ENCODE measurements at regions of chr11 and their contacts with region 1.

Region 1: DNA sequence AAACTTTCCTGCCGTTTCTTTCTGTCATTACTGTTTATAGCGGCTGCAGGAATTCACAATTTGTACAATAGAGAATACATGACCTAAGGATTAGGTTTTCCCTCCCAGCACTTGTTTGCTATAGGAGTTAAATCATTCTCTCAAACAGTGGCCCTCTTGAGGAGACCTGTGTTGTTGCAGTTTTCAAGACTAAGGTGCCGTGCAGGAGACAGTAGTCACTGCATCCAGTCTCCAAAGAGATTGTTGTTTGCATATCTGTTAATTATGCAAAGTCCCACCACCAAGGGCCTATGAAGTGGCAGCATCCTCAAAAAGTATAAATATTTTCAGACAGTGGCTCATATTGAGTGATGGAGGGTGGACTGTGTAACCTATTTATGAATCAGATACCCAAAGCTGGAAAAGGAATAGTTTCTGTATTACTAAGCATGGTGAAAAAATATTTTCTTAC is 2.3 kb downstream of the PRSS23 start:
- DNase-seq: no peak
- H3K4me3 ChIP-seq: peak overlapping the region; percentile 77 to 85 (median 81)
- H3K27ac ChIP-seq: peak overlapping the region; percentile 8 to 88 (median 82)
- H3K4me1 ChIP-seq: peaks cover 20 to 66% (median 54%) of the 10 kb centered on the region in 4 donors
- H3K27me3 ChIP-seq: no peaks in the 10 kb centered on the region
- CTCF ChIP-seq: peak; percentile 52 to 71 (median 66)
- EP300 ChIP-seq: no peak
- POLR2A ChIP-seq: no peak

Region 2: GRCh38 chr11:86456052-86456939 is 346.3 kb before region 1 on chr11:
- intact Hi-C with region 1: loop called (anchors 5 kb)
- DNase-seq: peak; percentile 96
- H3K4me3 ChIP-seq: no peak overlapping the region
- H3K27ac ChIP-seq: peak overlapping the region in 1 of 4 donors; percentile 4
- H3K4me1 ChIP-seq: peaks cover 23 to 53% (median 42%) of the 10 kb centered on the region in 4 donors
- H3K27me3 ChIP-seq: peaks cover 0 to 4% (median 0%) of the 10 kb centered on the region in 4 donors
- CTCF ChIP-seq: peak; percentile 91
- EP300 ChIP-seq: no peak
- POLR2A ChIP-seq: no peak

Region 3: DNA sequence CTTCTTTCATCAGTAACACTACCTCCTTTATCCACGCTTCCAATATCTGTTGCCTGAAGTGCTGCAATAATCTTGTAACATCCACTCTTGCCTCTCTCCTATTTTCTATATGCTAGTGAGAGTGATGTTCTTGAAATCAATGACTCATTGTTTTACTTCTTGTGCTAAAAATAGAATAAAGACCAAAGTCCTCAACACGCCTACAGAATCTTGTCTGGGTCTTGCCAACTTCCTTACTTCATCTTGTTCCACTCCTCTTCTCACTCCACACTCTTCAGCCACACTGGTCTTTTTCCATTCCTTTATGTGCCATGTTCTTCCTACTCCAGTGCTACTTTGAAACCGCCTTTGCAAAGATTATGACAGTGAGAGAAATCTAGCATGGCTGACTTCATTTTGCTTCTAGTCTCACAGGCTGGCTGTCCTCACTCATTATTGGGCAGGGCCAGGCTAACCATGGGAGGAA is 291.5 kb before region 1 on chr11:
- intact Hi-C with region 1: no loop called
- DNase-seq: no peak
- H3K4me3 ChIP-seq: no peak overlapping the region
- H3K27ac ChIP-seq: no peak overlapping the region
- H3K4me1 ChIP-seq: peaks cover 7 to 20% (median 20%) of the 10 kb centered on the region in 4 donors
- H3K27me3 ChIP-seq: no peaks in the 10 kb centered on the region
- CTCF ChIP-seq: no peak
- EP300 ChIP-seq: no peak
- POLR2A ChIP-seq: no peak

Region 4: DNA sequence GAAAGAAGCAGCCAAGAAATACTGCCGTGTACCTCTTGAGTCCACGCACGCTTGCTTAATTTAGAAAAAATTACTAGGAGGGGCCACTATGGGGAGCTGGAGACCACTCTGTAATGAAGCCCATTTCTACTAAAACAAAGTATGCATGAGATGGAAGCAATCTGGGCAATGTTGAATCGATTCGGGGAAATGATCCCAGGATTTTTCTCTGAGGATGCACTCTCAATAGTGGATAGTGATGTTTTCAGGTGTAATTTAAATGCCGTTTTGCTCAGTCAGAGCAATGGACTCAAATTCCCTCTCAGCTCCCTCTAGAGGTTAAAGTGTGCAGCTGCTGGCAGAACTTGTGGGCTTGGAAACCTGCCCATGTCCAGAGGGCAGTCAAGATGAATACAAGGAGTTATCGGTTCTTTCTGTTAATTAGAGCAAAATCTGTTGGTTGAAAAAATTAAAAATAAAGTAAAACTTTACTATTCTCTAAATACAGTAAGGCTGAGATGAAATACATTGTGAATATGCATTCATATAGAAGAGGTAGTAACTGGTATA is 194.3 kb before region 1 on chr11:
- intact Hi-C with region 1: loop called (anchors 5 kb)
- DNase-seq: peak; percentile 92
- H3K4me3 ChIP-seq: peak overlapping the region in 3 of 4 donors; percentile 21 to 33 (median 25)
- H3K27ac ChIP-seq: peak overlapping the region; percentile 1 to 69 (median 30)
- H3K4me1 ChIP-seq: peaks cover 25 to 48% (median 40%) of the 10 kb centered on the region in 4 donors
- H3K27me3 ChIP-seq: no peaks in the 10 kb centered on the region
- CTCF ChIP-seq: peak; percentile 87 to 92 (median 91)
- EP300 ChIP-seq: no peak
- POLR2A ChIP-seq: no peak

Region 5: GRCh38 chr11:86620891-86621521 is 181.6 kb before region 1 on chr11:
- intact Hi-C with region 1: loop called (anchors 5 kb)
- DNase-seq: no peak
- H3K4me3 ChIP-seq: no peak overlapping the region
- H3K27ac ChIP-seq: peak overlapping the region; percentile 42 to 73 (median 70)
- H3K4me1 ChIP-seq: peaks cover 27 to 68% (median 62%) of the 10 kb centered on the region in 4 donors
- H3K27me3 ChIP-seq: no peaks in the 10 kb centered on the region
- CTCF ChIP-seq: no peak
- EP300 ChIP-seq: no peak
- POLR2A ChIP-seq: no peak

Region 6: DNA sequence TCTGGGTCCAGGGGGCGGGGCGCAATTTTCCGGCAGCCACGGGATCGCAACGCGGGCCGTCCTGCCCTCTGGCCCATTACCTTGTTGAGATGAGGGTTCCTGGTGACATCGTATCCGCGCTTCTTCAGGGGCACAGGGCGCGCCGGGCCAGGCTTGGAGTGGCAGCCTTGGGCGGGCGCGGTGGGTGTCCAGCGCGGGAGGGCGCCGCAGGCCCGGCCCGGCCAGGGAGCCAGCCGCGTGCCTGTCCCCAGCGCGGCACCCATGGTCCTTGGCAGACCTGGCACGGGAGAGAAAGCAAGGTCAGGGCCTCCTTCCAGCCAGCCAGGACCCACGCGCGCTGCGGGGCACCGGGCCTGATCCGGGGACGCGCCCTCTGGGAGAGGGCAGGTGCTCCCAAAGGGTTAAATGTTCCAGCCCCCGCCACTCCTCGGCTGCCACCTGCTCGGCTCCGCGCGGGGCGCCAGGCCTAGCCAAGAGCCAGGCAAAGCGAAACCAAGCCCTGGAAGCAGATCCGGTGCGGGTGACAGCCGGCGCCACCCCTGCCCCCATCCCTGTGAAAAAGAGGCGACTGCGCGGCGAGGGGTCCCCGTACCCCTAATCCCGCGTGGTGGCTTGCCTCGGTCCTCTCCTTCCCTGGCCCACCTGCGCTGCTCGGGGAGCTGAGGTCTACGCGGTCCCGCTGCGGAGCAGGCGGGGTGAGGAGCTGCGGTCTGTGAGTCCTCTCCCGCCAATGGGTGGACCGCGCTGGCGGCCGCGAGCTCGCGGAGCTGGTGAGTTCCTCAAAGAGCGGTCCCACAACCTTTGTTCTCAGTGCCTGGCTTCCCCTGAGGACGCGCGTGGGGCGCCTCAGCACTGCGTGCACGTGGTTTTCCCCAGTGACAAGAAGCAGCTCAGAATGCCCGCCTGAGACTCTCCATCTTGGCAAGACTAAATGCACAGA is 130.7 kb before region 1 on chr11 and contains the start of gene ME3:
- intact Hi-C with region 1: loop called (anchors 5 kb)
- DNase-seq: no peak
- H3K4me3 ChIP-seq: peak within 1 kb of the TSS; percentile 65 to 88 (median 74)
- H3K27ac ChIP-seq: peak within 1 kb of the TSS; percentile 89 to 98 (median 94)
- H3K4me1 ChIP-seq: peaks cover 24 to 68% (median 56%) of the 10 kb centered on the region in 4 donors
- H3K27me3 ChIP-seq: no peaks in the 10 kb centered on the region
- CTCF ChIP-seq: no peak
- EP300 ChIP-seq: no peak
- POLR2A ChIP-seq: no peak
- total RNA-seq, gene ME3: 20.4 to 50.1 (median 26.2) TPM

Region 7: GRCh38 chr11:86740709-86741483 is 61.7 kb before region 1 on chr11:
- intact Hi-C with region 1: loop called (anchors 5 kb)
- DNase-seq: no peak
- H3K4me3 ChIP-seq: no peak overlapping the region
- H3K27ac ChIP-seq: peak overlapping the region; percentile 91 to 94 (median 92)
- H3K4me1 ChIP-seq: peaks cover 44 to 83% (median 77%) of the 10 kb centered on the region in 4 donors
- H3K27me3 ChIP-seq: no peaks in the 10 kb centered on the region
- CTCF ChIP-seq: no peak
- EP300 ChIP-seq: no peak
- POLR2A ChIP-seq: no peak

Region 8: DNA sequence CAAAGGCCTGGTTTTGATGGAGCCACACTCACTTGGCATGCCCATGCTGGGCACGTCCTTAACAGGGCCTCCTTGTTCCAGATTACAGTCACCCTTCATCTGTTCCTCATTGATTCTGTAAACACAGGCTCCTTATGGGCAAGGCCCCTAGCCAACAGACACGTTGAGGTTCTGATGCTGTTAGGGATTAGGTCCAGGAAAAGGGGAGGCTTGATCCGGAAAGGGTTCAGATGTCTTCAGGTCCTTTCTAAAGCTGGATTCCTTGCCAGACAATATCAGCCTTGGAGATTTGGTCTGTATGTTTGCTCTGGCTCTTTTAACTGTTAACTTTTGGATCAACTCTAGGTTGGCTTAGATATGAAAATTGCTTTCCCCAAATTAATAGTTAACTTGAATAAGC is 49.2 kb before region 1 on chr11:
- intact Hi-C with region 1: no loop called
- DNase-seq: peak; percentile 77
- H3K4me3 ChIP-seq: no peak overlapping the region
- H3K27ac ChIP-seq: no peak overlapping the region
- H3K4me1 ChIP-seq: peaks cover 0 to 5% (median 0%) of the 10 kb centered on the region in 4 donors
- H3K27me3 ChIP-seq: no peaks in the 10 kb centered on the region
- CTCF ChIP-seq: no peak
- EP300 ChIP-seq: no peak
- POLR2A ChIP-seq: no peak

Region 9: GRCh38 chr11:86769219-86769618 is 33.4 kb before region 1 on chr11:
- intact Hi-C with region 1: no loop called
- DNase-seq: peak; percentile 70
- H3K4me3 ChIP-seq: no peak overlapping the region
- H3K27ac ChIP-seq: no peak overlapping the region
- H3K4me1 ChIP-seq: peaks cover 0 to 10% (median 5%) of the 10 kb centered on the region in 4 donors
- H3K27me3 ChIP-seq: no peaks in the 10 kb centered on the region
- CTCF ChIP-seq: no peak
- EP300 ChIP-seq: no peak
- POLR2A ChIP-seq: no peak